ENCODE measurements at regions of chr2 and their contacts with region 1.

Region 1: GRCh38 chr2:159022019-159022418 is 53.6 kb downstream of the TANC1 start:
- DNase-seq: no peak
- ATAC-seq: peak in 3 of 4 donors; percentile 10 to 55 (median 45)
- H3K4me3 ChIP-seq: no peak overlapping the region
- H3K27ac ChIP-seq: no peak overlapping the region
- H3K4me1 ChIP-seq: peaks cover 0 to 83% (median 33%) of the 10 kb centered on the region in 12 donors
- H3K27me3 ChIP-seq: no peaks in the 10 kb centered on the region
- CTCF ChIP-seq: no peak
- POLR2A ChIP-seq: no peak

Region 2: GRCh38 chr2:159010340-159010739 is 11.7 kb before region 1 on chr2:
- intact Hi-C with region 1: loop called in 1 of 10 experiments (anchors 1 kb)
- DNase-seq: no peak
- ATAC-seq: no peak
- H3K4me3 ChIP-seq: no peak overlapping the region
- H3K27ac ChIP-seq: no peak overlapping the region
- H3K4me1 ChIP-seq: peaks cover 2 to 44% (median 29%) of the 10 kb centered on the region in 12 donors
- H3K27me3 ChIP-seq: no peaks in the 10 kb centered on the region
- CTCF ChIP-seq: no peak
- POLR2A ChIP-seq: no peak

Region 3: GRCh38 chr2:159054985-159055384 is 33.0 kb after region 1 on chr2:
- intact Hi-C with region 1: no loop called
- DNase-seq: no peak
- ATAC-seq: peak in 1 of 4 donors; percentile 31
- H3K4me3 ChIP-seq: no peak overlapping the region
- H3K27ac ChIP-seq: no peak overlapping the region
- H3K4me1 ChIP-seq: peaks cover 0 to 80% (median 35%) of the 10 kb centered on the region in 12 donors
- H3K27me3 ChIP-seq: no peaks in the 10 kb centered on the region
- CTCF ChIP-seq: no peak
- POLR2A ChIP-seq: no peak